ENCODE measurements at regions of chr10 and their contacts with region 1.

Region 1: GRCh38 chr10:87771871-87772500 is 46.0 kb downstream of the ATAD1 start:
- DNase-seq: no peak
- H3K4me3 ChIP-seq: no peak overlapping the region
- H3K27ac ChIP-seq: no peak overlapping the region
- H3K4me1 ChIP-seq: peaks cover 0 to 13% (median 0%) of the 10 kb centered on the region in 3 donors
- H3K27me3 ChIP-seq: no peaks in the 10 kb centered on the region
- CTCF ChIP-seq: peak in 5 of 6 experiments; percentile 26 to 61 (median 56)
- POLR2A ChIP-seq: no peak

Region 2: DNA sequence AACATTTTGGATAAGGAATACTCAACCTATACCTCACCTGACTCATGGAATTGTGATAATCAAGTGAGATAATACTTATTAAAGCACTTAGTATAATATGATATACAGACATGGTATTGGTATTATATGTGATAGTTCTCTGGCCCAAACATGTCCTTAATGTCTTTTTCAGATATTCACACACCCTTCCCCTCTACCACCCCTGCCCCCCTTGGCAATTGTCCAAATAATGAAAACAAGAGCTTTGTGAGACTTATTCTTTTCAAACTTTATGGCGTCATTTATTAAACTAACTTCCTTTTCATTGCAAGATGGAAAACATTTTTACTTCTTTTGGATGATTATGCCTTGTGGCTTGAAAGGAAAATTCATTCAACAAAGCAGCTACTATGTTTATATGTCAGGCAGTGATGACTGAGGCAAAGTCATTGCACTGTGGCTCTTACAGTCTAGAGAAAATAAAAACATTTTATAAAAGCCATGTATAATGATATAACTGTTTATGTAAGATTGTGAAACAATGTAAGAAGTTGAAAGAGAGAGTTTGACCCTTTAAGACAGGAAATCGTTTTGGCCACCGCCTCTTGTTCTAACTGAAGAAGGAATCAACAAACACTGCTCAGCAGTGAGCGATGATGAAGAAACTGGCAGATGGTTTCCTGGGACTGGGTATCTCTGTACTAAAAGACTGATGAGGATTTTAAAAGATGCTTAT is 239.9 kb before region 1 on chr10:
- intact Hi-C with region 1: loop called (anchors 10 kb)
- DNase-seq: no peak
- H3K4me3 ChIP-seq: no peak overlapping the region
- H3K27ac ChIP-seq: peak overlapping the region in 3 of 4 donors; percentile 60 to 72 (median 64)
- H3K4me1 ChIP-seq: peaks cover 0 to 18% (median 0%) of the 10 kb centered on the region in 3 donors
- H3K27me3 ChIP-seq: no peaks in the 10 kb centered on the region
- CTCF ChIP-seq: no peak
- POLR2A ChIP-seq: no peak

Region 3: GRCh38 chr10:87659571-87660483 is 112.2 kb before region 1 on chr10 and contains the start of gene PAPSS2:
- intact Hi-C with region 1: loop called (anchors 10 kb)
- DNase-seq: no peak
- H3K4me3 ChIP-seq: peak within 1 kb of the TSS; percentile 59 to 88 (median 75)
- H3K27ac ChIP-seq: peak within 1 kb of the TSS; percentile 65 to 86 (median 80)
- H3K4me1 ChIP-seq: peaks cover 11 to 43% (median 14%) of the 10 kb centered on the region in 3 donors
- H3K27me3 ChIP-seq: peaks cover 0 to 21% (median 3%) of the 10 kb centered on the region in 4 donors
- CTCF ChIP-seq: no peak
- POLR2A ChIP-seq: peak in 2 of 4 donors; percentile 26 to 49
- total RNA-seq, gene PAPSS2: 1.8 to 13.3 (median 11.0) TPM

Measured in esophagus squamous epithelium (tissue), 5 donors.